Activated CD4-positive, alpha-beta T cell treated with anti-CD3 and anti-CD28 coated beads, Interleukin-2, amount 10 ng/mL, durations not matched to agents 24 days and 14 days (primary cell): ENCODE measurements at regions of chr17 and their contacts with region 1.

Region 1: GRCh38 chr17:40086150-40087044 is 14.0 kb downstream of the NR1D1 start:
- DNase-seq: peak; percentile 87
- H3K4me3 Mint-ChIP-seq: no peak overlapping the region
- H3K27ac Mint-ChIP-seq: no peak overlapping the region
- H3K4me1 Mint-ChIP-seq: peaks cover 4% of the 10 kb centered on the region
- H3K27me3 Mint-ChIP-seq: no peaks in the 10 kb centered on the region

Region 2: DNA sequence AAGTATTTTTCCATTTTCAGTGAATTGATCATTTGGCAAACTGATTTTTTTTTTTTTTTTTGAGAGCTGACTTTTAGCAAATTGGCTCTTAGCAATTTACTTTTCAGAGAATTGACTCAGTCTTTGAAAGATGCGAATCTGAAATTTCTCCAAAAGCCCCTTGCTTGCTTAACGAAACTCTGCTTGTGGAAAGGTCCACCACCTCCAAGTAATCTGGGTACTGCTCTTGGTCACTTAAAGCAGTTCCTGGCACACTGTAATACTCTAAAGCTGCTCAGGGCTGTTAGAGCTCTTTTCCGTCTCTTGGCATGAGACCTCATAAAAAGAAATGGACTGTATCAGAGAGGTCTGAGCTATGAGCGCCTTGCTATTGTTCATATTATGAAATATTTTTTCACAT is 170.8 kb before region 1 on chr17:
- intact Hi-C with region 1: no loop called
- DNase-seq: no peak
- H3K4me3 Mint-ChIP-seq: no peak overlapping the region
- H3K27ac Mint-ChIP-seq: no peak overlapping the region
- H3K4me1 Mint-ChIP-seq: peaks cover 33% of the 10 kb centered on the region
- H3K27me3 Mint-ChIP-seq: no peaks in the 10 kb centered on the region

Region 3: DNA sequence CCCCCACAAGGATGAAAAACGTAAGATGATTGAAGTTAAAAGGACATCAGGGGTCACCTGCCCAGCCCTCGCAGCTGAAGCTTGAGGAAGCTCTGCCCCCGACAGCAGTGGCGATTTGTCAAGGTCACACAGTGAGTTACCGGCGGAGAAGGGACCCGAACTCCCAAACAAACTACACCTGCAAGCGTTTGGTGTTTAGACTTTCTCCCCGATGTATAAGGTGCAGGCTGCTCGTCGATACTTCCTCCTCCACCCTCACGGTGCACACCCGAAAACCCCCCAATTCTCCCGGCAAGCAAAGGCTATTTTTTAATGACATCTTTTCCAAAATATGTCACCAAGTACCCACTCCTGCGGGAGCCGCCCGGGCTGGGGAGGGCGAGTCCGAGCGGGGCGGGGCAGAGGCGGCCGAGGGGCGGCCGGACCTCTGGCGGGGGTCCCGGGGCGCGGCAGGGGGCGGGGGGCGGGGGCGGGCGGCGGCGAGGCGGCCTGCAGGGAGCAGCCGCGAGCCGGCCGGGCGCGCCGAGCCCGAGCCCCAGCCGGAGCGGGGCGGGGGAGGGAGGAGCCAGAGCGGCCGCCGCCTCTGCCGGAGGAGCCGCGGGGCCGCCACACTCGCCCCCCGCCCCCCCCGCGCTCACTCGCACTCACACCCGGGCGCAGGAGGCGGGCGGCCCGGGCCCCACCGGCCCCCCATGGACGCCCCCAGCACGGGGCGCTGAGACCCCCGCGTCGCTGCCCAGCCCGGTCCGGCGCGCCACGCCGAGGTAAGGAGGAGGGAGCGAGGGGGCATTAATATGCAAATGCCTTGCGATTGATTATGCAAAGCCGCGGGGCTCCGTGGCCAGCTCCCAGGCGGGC is 23.8 kb before region 1 on chr17 and contains the start of gene THRA:
- intact Hi-C with region 1: loop called (anchors 2 kb)
- DNase-seq: peak; percentile 91
- H3K4me3 Mint-ChIP-seq: peak within 1 kb of the TSS; percentile 82
- H3K27ac Mint-ChIP-seq: peak within 1 kb of the TSS; percentile 6
- H3K4me1 Mint-ChIP-seq: peaks cover 27% of the 10 kb centered on the region
- H3K27me3 Mint-ChIP-seq: peaks cover 45% of the 10 kb centered on the region
- total RNA-seq, gene THRA: 4.5 and 5.1 TPM in 2 replicates